ENCODE measurements at regions of chr6 and their contacts with region 1.

Region 1: DNA sequence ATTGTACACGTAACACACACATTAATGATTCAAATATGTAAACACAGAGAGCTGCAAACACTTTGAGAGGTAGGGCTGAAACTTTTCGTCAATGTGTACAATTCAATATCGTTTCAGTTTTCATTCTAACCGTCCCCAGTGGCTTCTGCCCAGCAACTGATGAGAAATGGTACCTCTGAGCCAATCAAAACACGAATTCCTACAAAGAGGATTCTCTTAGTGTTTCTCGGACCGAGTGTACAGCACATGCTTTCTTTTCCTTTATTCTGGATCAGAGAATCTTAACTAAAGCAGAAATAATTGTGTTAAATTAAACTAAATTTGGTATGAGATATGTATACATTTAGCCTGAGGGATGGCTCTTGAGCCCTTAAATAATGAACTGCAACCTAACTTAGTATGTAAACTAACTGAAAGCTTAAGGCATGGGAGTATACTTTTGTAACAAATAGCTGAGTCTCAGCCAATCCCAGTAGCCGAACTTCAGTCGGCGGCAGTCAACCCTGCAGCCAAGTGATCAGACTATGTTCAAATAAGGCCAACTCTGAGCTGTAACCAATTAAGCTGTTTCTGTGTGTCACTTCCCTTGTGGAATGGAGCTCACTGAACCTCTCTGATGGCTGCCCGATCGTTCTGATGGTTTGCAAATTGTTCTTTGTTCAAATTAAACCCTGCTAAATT is 16.1 kb downstream of the BTN2A1 start:
- DNase-seq: peak; percentile 60 to 96 (median 76)
- ATAC-seq: peak; percentile 91
- H3K4me3 ChIP-seq: peak overlapping the region; percentile 56
- H3K4me3 Mint-ChIP-seq: peak overlapping the region; percentile 94
- H3K27ac ChIP-seq: peak overlapping the region; percentile 85 to 90
- H3K27ac Mint-ChIP-seq: peak overlapping the region; percentile 99
- H3K4me1 ChIP-seq: peaks cover 45% of the 10 kb centered on the region
- H3K4me1 Mint-ChIP-seq: peaks cover 64% of the 10 kb centered on the region
- H3K27me3 ChIP-seq: no peaks in the 10 kb centered on the region
- H3K27me3 Mint-ChIP-seq: no peaks in the 10 kb centered on the region
- CTCF ChIP-seq: no peak

Region 2: DNA sequence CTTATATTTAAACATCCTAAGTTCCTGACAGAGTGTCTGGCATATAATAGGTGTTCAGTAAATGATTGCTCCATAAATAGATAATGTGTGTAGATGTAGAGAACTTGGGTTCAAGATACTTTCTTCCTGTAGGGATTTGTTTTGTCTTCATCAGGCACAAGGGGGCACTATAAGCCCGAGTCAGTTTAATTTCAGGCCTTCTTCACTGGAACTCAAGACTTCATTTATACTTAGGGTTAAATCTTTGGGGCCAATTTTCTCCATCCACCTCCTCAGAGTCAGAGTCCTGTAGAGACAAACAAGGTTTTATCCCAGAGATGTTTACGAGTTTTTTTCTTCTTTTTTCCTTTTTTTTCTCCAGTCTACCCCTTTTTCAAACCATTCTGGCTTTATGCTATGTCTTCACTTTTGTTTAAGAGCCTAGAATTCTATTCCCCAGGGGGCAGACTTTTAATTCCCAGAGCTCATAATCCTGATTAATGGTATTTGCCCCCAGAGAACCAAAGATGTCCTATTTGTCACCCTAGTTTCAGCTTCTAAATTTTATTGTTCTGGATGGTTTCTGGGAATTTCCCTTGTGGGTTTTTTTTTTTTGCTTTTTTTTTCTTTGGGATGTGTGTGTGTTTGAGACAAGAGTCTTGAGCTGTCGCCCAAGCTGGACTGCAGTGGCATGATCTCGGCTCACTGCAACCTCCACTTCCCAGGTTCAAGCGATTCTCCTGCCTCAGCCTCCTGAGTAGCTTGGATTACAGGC is 298.3 kb before region 1 on chr6:
- CTCF ChIA-PET with region 1: no interaction called
- POLR2A ChIA-PET with region 1: interaction called, 11 read pairs
- intact Hi-C with region 1: no loop called
- DNase-seq: peak in 11 of 14 experiments; percentile 13 to 85 (median 54)
- ATAC-seq: no peak
- H3K4me3 ChIP-seq: no peak overlapping the region
- H3K4me3 Mint-ChIP-seq: peak overlapping the region; percentile 83
- H3K27ac ChIP-seq: peak overlapping the region in 1 of 2 donors; percentile 41
- H3K27ac Mint-ChIP-seq: peak overlapping the region; percentile 93
- H3K4me1 ChIP-seq: peaks cover 17% of the 10 kb centered on the region
- H3K4me1 Mint-ChIP-seq: peaks cover 53% of the 10 kb centered on the region
- H3K27me3 ChIP-seq: no peaks in the 10 kb centered on the region
- H3K27me3 Mint-ChIP-seq: no peaks in the 10 kb centered on the region
- CTCF ChIP-seq: peak; percentile 87

Region 3: DNA sequence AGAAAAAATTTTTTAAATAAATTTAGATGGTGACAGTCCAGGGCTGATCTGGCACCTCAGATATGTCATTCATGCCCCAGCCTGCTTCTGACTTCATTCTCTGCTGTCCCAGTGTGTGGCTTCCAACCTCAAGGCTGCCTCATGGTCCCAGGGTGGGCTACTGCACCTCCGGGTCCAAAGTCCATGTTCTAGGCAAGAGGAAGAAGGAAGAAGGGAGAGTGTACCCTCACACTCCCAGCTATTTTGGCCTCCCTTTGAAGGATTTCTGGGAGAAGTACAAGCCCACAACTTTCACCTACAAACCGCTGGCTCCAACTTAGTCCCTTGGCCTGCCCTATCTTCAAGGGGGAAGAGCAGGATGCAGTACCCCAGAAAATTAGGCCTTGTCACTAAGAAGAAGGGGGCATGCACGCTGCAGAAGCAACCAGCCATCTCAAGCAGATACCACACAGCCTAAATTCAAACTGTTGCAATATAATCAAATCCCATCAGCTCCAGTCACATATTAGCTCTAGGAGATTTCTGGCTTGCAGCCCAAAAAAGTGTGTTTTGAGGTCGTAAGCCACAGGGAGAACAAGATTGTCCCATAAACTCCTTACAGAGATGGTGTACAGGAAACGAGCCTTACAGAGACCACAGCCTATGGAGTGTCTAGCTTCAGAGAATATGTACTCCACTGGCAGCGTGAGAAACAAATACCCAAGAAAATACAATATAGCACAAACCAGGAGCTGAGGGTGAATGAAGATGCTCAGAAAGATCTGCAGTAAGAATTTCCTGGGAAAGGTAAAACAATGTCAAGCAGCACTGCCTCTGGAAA is 109.8 kb before region 1 on chr6:
- CTCF ChIA-PET with region 1: no interaction called
- POLR2A ChIA-PET with region 1: interaction called, 6 read pairs
- intact Hi-C with region 1: loop called in 1 of 2 experiments (anchors 10 kb)
- DNase-seq: peak in 5 of 14 experiments; percentile 4 to 64 (median 47)
- ATAC-seq: peak; percentile 21
- H3K4me3 ChIP-seq: peak overlapping the region; percentile 91
- H3K4me3 Mint-ChIP-seq: no peak overlapping the region
- H3K27ac ChIP-seq: peak overlapping the region; percentile 93 to 94
- H3K27ac Mint-ChIP-seq: no peak overlapping the region
- H3K4me1 ChIP-seq: peaks cover 40% of the 10 kb centered on the region
- H3K4me1 Mint-ChIP-seq: peaks cover 53% of the 10 kb centered on the region
- H3K27me3 ChIP-seq: no peaks in the 10 kb centered on the region
- H3K27me3 Mint-ChIP-seq: no peaks in the 10 kb centered on the region
- CTCF ChIP-seq: no peak

Region 4: DNA sequence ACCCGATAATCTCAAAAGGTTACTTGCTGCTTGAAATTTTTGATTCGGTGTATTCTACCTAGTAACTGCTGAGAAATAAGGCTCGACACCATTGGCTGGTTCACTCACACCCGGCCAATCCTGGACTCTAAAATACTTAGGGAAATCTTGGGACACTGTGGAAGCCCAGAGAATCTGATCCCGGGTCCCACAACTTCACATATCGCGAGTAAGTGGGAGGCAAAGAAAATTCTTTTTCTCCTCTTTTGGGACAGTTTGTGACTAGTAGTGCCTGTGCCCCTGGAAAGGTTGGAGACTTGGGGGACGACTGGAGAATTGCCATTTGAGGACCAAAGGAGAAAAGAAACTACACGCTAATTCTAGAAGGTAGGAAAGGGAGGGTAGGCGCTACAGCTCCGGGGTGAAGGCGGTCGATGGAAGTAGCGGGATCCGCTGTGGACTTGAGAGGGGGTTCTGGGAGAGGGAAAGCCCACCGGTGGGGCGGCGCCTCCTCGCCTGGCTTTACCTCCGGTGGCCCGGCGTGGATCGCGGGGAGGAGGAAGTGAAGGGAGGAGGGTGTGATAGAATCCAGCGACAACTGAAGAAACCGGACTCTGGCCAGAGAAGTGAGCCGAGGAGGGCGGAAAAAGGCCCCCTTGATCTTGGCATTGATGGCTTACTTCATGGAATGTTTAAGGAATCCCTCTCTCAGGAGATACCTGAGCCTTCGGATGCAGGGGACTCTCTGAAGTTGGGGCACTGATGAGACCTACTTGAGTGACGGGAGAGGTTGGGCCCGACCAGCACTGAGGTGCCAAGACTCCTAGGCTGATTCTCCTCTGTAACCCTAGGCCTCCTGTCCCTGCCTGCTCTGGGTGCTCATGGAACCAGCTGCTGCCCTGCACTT is 52.4 kb before region 1 on chr6:
- CTCF ChIA-PET with region 1: no interaction called
- POLR2A ChIA-PET with region 1: no interaction called
- intact Hi-C with region 1: no loop called
- DNase-seq: peak in 11 of 14 experiments; percentile 10 to 82 (median 29)
- ATAC-seq: peak; percentile 97
- H3K4me3 ChIP-seq: peak overlapping the region; percentile 93
- H3K4me3 Mint-ChIP-seq: no peak overlapping the region
- H3K27ac ChIP-seq: peak overlapping the region; percentile 36 to 40
- H3K27ac Mint-ChIP-seq: no peak overlapping the region
- H3K4me1 ChIP-seq: peaks cover 15% of the 10 kb centered on the region
- H3K4me1 Mint-ChIP-seq: peaks cover 4% of the 10 kb centered on the region
- H3K27me3 ChIP-seq: no peaks in the 10 kb centered on the region
- H3K27me3 Mint-ChIP-seq: no peaks in the 10 kb centered on the region
- CTCF ChIP-seq: no peak

Region 5: DNA sequence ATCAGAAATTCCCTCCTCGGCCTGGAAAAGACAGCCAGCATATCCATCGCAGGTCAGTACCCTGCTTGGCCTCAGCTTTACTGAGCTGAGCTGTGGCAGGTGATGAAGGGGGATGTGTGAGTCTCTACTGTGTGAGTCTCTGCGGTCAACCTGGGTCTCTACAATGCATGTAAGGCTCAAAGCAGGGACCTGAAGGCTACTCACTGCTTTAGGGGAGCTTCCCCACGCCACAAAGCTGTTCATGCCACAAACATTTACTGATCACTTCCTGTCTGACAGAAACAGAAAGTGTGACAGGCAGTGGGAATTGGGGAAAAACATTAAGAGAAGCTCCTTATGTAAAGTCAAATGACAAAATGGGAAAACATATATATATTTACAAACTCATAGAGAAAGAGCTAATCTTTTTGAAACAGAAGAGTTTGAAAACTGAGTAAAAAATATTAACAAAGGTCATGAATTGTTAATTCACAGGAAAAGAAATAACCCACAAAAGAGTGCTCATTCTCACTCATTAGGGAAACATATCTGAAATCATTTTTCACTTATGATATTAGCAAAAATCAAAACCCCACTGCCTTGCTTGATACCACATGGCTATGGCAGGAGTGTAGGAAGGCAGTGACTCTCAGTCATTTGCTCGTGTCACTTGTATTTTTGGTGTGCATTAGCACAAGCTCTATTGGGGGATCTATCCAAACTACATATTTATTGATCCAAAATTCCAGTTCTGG is 27.8 kb before region 1 on chr6:
- CTCF ChIA-PET with region 1: no interaction called
- POLR2A ChIA-PET with region 1: interaction called, 16 read pairs
- intact Hi-C with region 1: no loop called
- DNase-seq: peak in 5 of 14 experiments; percentile 9 to 67 (median 59)
- ATAC-seq: peak; percentile 64
- H3K4me3 ChIP-seq: no peak overlapping the region
- H3K4me3 Mint-ChIP-seq: peak overlapping the region; percentile 34
- H3K27ac ChIP-seq: peak overlapping the region in 1 of 2 donors; percentile 71
- H3K27ac Mint-ChIP-seq: peak overlapping the region; percentile 43
- H3K4me1 ChIP-seq: peaks cover 46% of the 10 kb centered on the region
- H3K4me1 Mint-ChIP-seq: peaks cover 64% of the 10 kb centered on the region
- H3K27me3 ChIP-seq: no peaks in the 10 kb centered on the region
- H3K27me3 Mint-ChIP-seq: no peaks in the 10 kb centered on the region
- CTCF ChIP-seq: no peak

Region 6: DNA sequence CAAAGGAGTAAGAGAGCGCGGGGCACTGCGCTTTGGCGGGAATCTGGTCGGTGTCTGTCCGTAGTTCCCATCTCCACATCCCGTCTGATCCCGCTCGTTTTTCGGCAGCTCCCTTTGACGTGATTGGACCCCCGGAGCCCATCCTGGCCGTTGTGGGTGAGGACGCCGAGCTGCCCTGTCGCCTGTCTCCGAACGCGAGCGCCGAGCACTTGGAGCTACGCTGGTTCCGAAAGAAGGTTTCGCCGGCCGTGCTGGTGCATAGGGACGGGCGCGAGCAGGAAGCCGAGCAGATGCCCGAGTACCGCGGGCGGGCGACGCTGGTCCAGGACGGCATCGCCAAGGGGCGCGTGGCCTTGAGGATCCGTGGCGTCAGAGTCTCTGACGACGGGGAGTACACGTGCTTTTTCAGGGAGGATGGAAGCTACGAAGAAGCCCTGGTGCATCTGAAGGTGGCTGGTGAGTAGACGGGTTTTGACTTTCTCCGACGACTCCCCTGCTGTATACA is 27.6 kb after region 1 on chr6:
- CTCF ChIA-PET with region 1: interaction called, 3 read pairs
- POLR2A ChIA-PET with region 1: interaction called, 25 read pairs
- intact Hi-C with region 1: no loop called
- DNase-seq: peak in 13 of 14 experiments; percentile 3 to 68 (median 30)
- ATAC-seq: peak; percentile 73
- H3K4me3 ChIP-seq: peak overlapping the region; percentile 50
- H3K4me3 Mint-ChIP-seq: peak overlapping the region; percentile 82
- H3K27ac ChIP-seq: no peak overlapping the region
- H3K27ac Mint-ChIP-seq: no peak overlapping the region
- H3K4me1 ChIP-seq: peaks cover 13% of the 10 kb centered on the region
- H3K4me1 Mint-ChIP-seq: peaks cover 16% of the 10 kb centered on the region
- H3K27me3 ChIP-seq: peaks cover 5 to 25% of the 10 kb centered on the region in 2 experiments
- H3K27me3 Mint-ChIP-seq: peaks cover 40% of the 10 kb centered on the region
- CTCF ChIP-seq: no peak

Region 7: DNA sequence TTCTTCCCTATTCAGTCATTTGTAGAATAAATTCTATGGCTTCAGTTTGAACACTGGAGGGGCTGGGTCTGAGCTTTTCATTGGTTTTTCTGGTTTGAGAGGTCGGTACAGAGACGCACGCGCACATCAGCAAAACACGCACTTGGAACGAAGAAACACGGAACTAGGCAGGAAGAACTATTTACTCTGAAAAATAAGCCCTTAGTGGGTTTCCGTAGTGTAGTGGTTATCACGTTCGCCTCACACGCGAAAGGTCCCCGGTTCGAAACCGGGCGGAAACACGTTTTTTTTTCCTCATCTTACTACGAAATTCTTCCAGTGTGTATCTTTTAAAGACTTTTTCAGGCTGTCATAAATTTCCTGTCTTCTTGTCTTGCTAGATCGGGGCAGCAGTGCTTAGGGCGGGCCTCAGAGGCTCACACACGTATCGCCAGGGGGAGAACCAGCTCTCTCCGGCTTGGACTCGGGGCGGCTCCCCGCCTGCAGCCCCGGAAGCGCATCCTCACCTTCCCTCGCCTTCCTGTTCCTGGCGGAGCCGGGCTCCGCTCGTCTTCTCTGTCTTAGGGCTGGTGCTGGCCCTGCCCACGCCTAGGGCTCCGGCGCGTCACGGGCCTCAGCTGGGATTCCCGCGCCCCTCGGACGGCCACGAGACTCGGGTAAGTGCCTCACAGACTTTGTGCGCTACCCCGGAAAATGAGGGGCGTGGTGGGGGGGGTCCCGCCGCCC is 64.1 kb after region 1 on chr6 and contains the start of gene HMGN4:
- CTCF ChIA-PET with region 1: interaction called, 4 read pairs
- POLR2A ChIA-PET with region 1: interaction called, 102 read pairs
- intact Hi-C with region 1: loop called in 1 of 2 experiments (anchors 2 kb)
- DNase-seq: peak; percentile 66 to 97 (median 76)
- ATAC-seq: peak; percentile 70
- H3K4me3 ChIP-seq: peak within 1 kb of the TSS; percentile 93
- H3K4me3 Mint-ChIP-seq: peak within 1 kb of the TSS; percentile 94
- H3K27ac ChIP-seq: peak within 1 kb of the TSS; percentile 84 to 91
- H3K27ac Mint-ChIP-seq: peak within 1 kb of the TSS; percentile 98
- H3K4me1 ChIP-seq: peaks cover 51% of the 10 kb centered on the region
- H3K4me1 Mint-ChIP-seq: peaks cover 57% of the 10 kb centered on the region
- H3K27me3 ChIP-seq: no peaks in the 10 kb centered on the region
- H3K27me3 Mint-ChIP-seq: peaks cover 13% of the 10 kb centered on the region
- CTCF ChIP-seq: no peak
- total RNA-seq, gene HMGN4: 22.7 to 24.8 TPM

Region 8: GRCh38 chr6:26659042-26659999 is 185.4 kb after region 1 on chr6 and contains the start of gene ZNF322:
- CTCF ChIA-PET with region 1: no interaction called
- POLR2A ChIA-PET with region 1: no interaction called
- intact Hi-C with region 1: no loop called
- DNase-seq: peak; percentile 62 to 92 (median 84)
- ATAC-seq: peak; percentile 91
- H3K4me3 ChIP-seq: peak within 1 kb of the TSS; percentile 81
- H3K4me3 Mint-ChIP-seq: peak within 1 kb of the TSS; percentile 86
- H3K27ac ChIP-seq: no peak within 1 kb of the TSS
- H3K27ac Mint-ChIP-seq: peak within 1 kb of the TSS; percentile 4
- H3K4me1 ChIP-seq: peaks cover 16% of the 10 kb centered on the region
- H3K4me1 Mint-ChIP-seq: peaks cover 51% of the 10 kb centered on the region
- H3K27me3 ChIP-seq: peaks cover 0 to 15% of the 10 kb centered on the region in 2 experiments
- H3K27me3 Mint-ChIP-seq: peaks cover 27% of the 10 kb centered on the region
- CTCF ChIP-seq: no peak
- total RNA-seq, gene ZNF322: 0.92 to 0.93 TPM

Measured in CD4-positive, alpha-beta T cell (primary cell).